ENCODE measurements at regions of chr12 and their contacts with region 1.

Region 1: GRCh38 chr12:50132505-50133135 is 20.6 kb downstream of the COX14 start:
- DNase-seq: no peak
- H3K4me3 Mint-ChIP-seq: no peak overlapping the region
- H3K27ac Mint-ChIP-seq: peak overlapping the region; percentile 55
- H3K4me1 Mint-ChIP-seq: peaks cover 6% of the 10 kb centered on the region
- H3K27me3 Mint-ChIP-seq: no peaks in the 10 kb centered on the region

Region 2: GRCh38 chr12:49959570-49960465 is 172.8 kb before region 1 on chr12:
- CTCF ChIA-PET with region 1: no interaction called
- POLR2A ChIA-PET with region 1: no interaction called
- intact Hi-C with region 1: no loop called
- DNase-seq: no peak
- H3K4me3 Mint-ChIP-seq: no peak overlapping the region
- H3K27ac Mint-ChIP-seq: no peak overlapping the region
- H3K4me1 Mint-ChIP-seq: peaks cover 8% of the 10 kb centered on the region
- H3K27me3 Mint-ChIP-seq: peaks cover 68% of the 10 kb centered on the region

Region 3: GRCh38 chr12:50013381-50014147 is 119.1 kb before region 1 on chr12:
- CTCF ChIA-PET with region 1: no interaction called
- POLR2A ChIA-PET with region 1: no interaction called
- intact Hi-C with region 1: no loop called
- DNase-seq: no peak
- H3K4me3 Mint-ChIP-seq: no peak overlapping the region
- H3K27ac Mint-ChIP-seq: no peak overlapping the region
- H3K4me1 Mint-ChIP-seq: peaks cover 10% of the 10 kb centered on the region
- H3K27me3 Mint-ChIP-seq: no peaks in the 10 kb centered on the region

Region 4: DNA sequence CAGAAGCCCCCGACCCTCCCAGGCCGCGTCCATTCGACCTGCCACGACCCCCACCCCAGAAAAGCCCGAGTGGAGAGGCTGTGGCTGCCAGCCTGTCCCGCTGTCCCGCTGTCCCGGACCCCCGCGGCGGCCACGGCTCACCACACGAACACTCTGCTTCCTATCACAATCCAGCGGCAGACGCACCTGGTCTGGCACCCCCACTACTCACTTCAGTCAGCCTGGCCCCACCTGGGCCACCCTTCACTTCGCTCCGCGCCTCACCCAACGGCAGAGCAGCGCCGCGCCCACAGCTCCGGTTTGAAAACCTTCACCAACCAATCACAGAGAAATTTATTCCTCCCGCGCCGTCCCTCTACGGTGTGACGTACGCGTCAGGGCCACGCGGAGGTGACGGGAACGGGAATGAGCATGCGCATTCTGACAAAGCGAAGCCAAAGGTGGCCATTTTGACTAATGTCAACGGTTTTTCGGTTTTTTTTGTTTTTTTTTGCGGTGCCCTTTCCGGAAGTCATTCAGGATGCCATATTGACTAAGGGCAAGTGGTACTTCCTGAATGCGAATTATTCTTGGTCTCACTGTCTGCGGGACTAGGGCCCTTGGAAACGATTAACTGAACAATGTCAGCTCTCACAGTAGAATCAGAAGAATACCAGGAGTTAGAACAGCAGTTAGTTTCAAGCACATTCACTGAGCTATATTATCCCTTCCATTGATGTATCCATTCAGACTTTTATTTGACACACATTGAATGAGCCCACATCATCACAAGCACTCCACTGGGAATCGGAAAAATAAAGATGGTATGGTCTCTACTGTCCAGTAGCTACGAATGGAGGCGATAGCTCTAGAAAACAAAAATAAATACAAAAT is 107.2 kb before region 1 on chr12 and contains the start of gene RACGAP1:
- CTCF ChIA-PET with region 1: no interaction called
- POLR2A ChIA-PET with region 1: no interaction called
- intact Hi-C with region 1: no loop called
- DNase-seq: peak; percentile 98
- H3K4me3 Mint-ChIP-seq: peak within 1 kb of the TSS; percentile 94
- H3K27ac Mint-ChIP-seq: peak within 1 kb of the TSS; percentile 91
- H3K4me1 Mint-ChIP-seq: peaks cover 14% of the 10 kb centered on the region
- H3K27me3 Mint-ChIP-seq: peaks cover 2% of the 10 kb centered on the region
- total RNA-seq, gene RACGAP1: 145 to 152 TPM

Region 5: GRCh38 chr12:50120521-50120920 is 12.1 kb before region 1 on chr12:
- CTCF ChIA-PET with region 1: interaction called, 128 read pairs
- POLR2A ChIA-PET with region 1: no interaction called
- intact Hi-C with region 1: no loop called
- DNase-seq: no peak
- H3K4me3 Mint-ChIP-seq: no peak overlapping the region
- H3K27ac Mint-ChIP-seq: no peak overlapping the region
- H3K4me1 Mint-ChIP-seq: peaks cover 28% of the 10 kb centered on the region
- H3K27me3 Mint-ChIP-seq: no peaks in the 10 kb centered on the region

Region 6: DNA sequence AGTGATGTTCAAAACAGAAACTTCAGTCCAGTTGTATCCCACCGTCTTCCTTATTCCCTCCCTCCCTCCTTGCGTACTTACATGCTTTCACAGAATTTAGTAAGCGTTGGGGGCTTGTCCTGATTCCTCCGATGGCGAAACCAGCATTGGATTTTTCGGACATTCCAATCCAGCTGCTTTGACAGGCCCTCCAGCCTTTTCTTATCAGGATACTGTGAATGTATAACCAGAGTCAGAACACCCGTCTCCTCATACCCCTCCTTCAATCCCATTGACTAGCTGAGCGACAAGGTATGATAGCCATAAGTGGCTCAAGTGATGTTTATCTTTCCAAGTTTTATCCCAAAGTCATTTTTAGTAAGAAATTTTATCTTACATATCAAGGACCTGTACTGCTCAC is 10.4 kb after region 1 on chr12:
- CTCF ChIA-PET with region 1: interaction called, 13 read pairs
- POLR2A ChIA-PET with region 1: interaction called, 3 read pairs
- intact Hi-C with region 1: no loop called
- DNase-seq: no peak
- H3K4me3 Mint-ChIP-seq: no peak overlapping the region
- H3K27ac Mint-ChIP-seq: no peak overlapping the region
- H3K4me1 Mint-ChIP-seq: peaks cover 4% of the 10 kb centered on the region
- H3K27me3 Mint-ChIP-seq: no peaks in the 10 kb centered on the region

Region 7: DNA sequence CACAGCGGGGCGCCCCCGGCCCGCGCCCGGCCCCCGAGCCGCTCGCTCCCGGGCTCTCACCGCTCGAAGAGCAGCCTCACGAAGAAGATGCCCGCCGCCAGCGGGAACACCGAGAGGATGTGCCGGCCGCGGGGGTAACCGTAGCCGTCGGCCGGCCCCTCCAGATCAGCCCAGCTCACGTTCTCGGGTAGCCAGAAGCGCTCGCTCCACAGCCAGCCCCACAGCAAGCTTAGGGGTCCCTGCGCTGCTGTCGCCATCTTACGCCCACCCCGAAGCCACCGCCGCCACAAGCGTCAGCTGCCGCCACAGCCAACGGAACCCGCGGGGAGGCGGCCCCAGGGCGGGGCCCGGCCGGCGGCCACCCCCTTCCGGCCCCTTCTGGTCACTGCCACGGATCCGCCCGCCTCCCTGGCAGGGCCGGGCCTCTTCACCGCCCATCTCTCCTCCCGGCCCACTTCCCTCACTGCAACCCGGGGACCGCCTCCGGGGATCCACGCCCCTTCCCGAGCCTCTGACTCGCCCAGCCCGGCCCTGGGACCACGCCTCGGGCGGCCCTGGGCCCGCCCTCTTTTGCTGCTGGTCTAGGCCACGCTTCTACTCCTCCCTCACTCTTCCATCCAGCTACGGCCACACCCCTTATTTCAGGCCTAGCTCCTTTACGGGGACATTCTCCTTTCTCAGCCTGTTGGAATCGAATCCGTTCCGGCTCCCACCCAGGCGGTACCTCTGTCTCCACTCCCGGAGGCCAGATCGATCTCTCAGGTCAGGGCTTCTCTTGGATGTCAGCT is 34.6 kb after region 1 on chr12 and contains the start of gene CERS5:
- CTCF ChIA-PET with region 1: interaction called, 30 read pairs
- POLR2A ChIA-PET with region 1: no interaction called
- intact Hi-C with region 1: no loop called
- DNase-seq: peak; percentile 99
- H3K4me3 Mint-ChIP-seq: peak within 1 kb of the TSS; percentile 84
- H3K27ac Mint-ChIP-seq: peak within 1 kb of the TSS; percentile 94
- H3K4me1 Mint-ChIP-seq: peaks cover 28% of the 10 kb centered on the region
- H3K27me3 Mint-ChIP-seq: no peaks in the 10 kb centered on the region
- total RNA-seq, gene CERS5: 59.5 to 63.0 TPM

Region 8: GRCh38 chr12:50174971-50175715 is 42.5 kb after region 1 on chr12:
- CTCF ChIA-PET with region 1: interaction called, 67 read pairs
- POLR2A ChIA-PET with region 1: no interaction called
- intact Hi-C with region 1: loop called (anchors 1 kb)
- DNase-seq: no peak
- H3K4me3 Mint-ChIP-seq: no peak overlapping the region
- H3K27ac Mint-ChIP-seq: no peak overlapping the region
- H3K4me1 Mint-ChIP-seq: no peaks in the 10 kb centered on the region
- H3K27me3 Mint-ChIP-seq: no peaks in the 10 kb centered on the region

Region 9: DNA sequence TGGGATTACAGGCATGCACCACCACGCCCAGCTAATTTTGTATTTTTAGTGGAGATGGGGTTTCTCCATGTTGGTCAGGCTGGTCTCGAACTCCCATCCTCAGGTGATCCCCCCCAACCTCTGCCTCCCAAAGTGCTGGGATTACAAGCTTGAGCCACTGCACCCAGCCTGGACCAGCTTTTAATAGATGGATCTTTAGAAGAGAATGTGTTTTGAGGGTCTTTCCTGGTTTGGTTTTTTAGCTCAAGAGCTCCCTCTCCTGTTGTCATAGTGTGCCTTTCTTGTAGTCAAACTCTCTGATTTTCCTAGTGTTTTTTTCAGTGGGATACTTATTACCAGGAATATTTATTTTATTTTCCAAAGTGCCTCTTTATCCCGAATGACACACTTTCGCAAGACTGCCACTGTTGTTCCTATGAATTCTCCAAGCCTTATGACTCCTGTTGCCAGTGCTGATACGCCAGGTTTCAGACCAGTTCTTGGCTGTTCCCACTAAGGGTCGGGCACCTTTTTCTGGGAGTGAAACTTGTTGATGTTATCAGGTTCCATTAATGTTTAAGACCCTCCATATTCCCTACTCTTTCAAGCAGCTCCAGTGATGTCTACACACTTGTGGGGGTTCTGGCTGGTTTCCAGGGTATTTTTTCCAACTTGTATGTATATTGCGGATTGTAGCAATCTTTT is 182.2 kb after region 1 on chr12:
- CTCF ChIA-PET with region 1: interaction called, 16 read pairs
- POLR2A ChIA-PET with region 1: no interaction called
- intact Hi-C with region 1: no loop called
- DNase-seq: no peak
- H3K4me3 Mint-ChIP-seq: no peak overlapping the region
- H3K27ac Mint-ChIP-seq: no peak overlapping the region
- H3K4me1 Mint-ChIP-seq: no peaks in the 10 kb centered on the region
- H3K27me3 Mint-ChIP-seq: no peaks in the 10 kb centered on the region

Measured in activated CD4-positive, alpha-beta memory T cell treated with anti-CD3 and anti-CD28 coated beads for 36 hours (primary cell).